ENCODE measurements at regions of chr2 and their contacts with region 1.

Region 1: DNA sequence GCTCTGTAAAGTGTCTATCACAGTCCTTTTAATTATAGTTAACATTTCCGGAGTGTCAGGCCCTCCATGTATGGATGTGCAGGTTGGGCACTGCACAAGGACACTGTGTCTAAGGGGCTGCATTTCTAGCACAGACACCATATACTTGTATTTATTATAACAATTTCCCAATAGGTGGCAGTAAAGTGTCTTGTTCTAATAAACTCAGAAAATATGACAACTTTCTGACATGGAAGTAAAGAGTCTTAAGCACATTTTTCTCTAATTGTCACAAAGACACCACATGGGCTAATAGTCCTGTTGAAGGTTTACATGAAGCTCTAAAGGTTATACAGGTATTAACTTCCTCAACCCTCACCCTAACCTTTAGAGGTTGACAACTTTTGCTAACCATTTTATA is 156.6 kb downstream of the DYSF start:
- DNase-seq: peak; percentile 7
- H3K4me3 ChIP-seq: no peak overlapping the region
- CTCF ChIP-seq: peak; percentile 23

Region 2: DNA sequence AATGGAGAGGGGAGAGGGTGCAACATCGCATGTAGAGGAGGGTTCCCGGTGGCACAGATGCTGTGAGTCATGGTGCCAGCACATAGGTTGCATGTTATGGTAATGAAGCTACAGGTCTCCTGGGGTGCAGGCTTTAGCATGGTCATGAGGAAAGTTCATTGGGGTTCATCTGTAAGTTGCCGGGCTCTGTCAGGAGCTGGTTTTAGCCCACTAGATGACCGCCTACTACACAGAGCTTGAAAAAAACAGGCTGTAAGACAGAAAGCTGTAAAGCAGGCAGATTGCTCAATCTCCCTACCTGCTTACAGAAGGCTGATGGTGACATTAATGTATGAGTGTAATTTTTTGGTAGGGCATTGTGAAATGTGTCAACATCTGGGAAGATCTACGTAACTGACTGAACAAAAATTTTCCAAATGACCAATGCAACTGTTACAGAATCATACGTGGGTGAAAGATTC is 132.7 kb before region 1 on chr2:
- CTCF ChIA-PET with region 1: no interaction called
- POLR2A ChIA-PET with region 1: no interaction called
- DNase-seq: no peak
- H3K4me3 ChIP-seq: no peak overlapping the region
- CTCF ChIP-seq: no peak

Region 3: DNA sequence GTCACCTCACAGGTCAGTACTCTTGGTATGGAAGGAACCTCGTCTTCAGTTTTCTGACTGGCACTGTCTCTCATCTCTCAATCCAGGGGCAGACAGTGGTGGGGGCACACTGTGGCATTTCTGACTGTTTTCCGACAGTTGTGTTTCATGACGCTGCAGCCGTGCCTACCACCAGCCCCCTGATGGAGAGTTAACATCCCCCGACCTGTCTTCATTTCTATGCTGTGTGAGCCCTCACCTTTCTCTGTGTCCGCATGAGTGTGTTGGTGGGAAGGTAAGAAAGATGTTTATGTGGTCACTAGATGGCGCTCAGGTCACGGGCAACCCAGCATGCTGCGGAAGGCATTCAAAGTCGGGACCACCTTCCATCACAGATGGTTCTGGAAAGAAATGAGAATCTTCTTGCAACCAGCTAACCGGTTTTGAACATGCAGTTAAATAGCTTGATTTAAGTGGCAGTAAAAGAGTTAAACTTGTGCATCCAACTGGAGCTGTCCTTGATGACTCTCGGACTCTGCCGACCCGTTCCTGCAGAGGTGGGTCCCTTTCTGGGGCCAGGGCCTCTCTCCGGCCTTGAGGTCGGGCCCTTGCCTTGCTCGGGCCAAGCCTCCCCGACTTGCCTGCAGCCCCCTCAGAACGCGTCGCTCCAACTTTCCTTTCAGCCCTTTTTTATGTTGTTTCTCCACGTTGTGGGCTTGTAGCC is 64.2 kb before region 1 on chr2:
- CTCF ChIA-PET with region 1: interaction called, 30 read pairs
- POLR2A ChIA-PET with region 1: no interaction called
- DNase-seq: no peak
- H3K4me3 ChIP-seq: no peak overlapping the region
- CTCF ChIP-seq: peak; percentile 68

Region 4: GRCh38 chr2:71592181-71592711 is 17.7 kb before region 1 on chr2:
- CTCF ChIA-PET with region 1: interaction called, 50 read pairs
- POLR2A ChIA-PET with region 1: no interaction called
- DNase-seq: no peak
- H3K4me3 ChIP-seq: no peak overlapping the region
- CTCF ChIP-seq: no peak

Region 5: GRCh38 chr2:71631411-71631931 is 21.5 kb after region 1 on chr2:
- CTCF ChIA-PET with region 1: interaction called, 13 read pairs
- POLR2A ChIA-PET with region 1: no interaction called
- DNase-seq: no peak
- H3K4me3 ChIP-seq: peak overlapping the region; percentile 39
- CTCF ChIP-seq: no peak

Region 6: GRCh38 chr2:71789556-71790204 is 179.7 kb after region 1 on chr2:
- CTCF ChIA-PET with region 1: interaction called, 276 read pairs
- POLR2A ChIA-PET with region 1: no interaction called
- DNase-seq: no peak
- H3K4me3 ChIP-seq: no peak overlapping the region
- CTCF ChIP-seq: peak; percentile 27

Region 7: DNA sequence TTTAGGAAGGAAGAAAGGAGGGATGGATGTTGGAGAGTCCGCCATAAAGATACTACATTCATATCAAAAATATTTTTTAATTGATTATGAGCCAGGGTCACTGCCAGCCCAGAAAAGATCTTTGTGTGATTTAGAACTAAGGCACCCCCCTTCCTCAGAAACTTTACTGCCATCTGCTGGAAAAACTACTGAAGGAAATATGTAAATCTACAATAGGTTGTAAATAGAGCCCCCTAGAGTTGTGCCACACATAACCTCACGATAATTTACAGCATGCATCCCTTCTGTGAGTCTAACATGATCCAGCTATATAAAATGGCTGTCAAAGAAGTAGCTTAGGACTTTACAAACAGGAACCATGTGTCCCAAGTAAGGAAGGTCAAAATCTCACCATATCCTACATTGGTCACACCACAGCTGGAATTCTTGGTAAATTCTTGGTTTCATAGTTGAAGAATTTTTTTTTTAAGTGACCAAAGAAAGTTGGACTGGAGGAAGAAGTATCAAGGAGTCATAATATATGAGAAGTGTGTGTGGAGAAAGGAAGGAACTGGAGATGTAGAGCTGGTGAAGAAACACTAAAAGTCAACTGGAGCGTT is 385.2 kb after region 1 on chr2:
- CTCF ChIA-PET with region 1: interaction called, 16 read pairs
- POLR2A ChIA-PET with region 1: no interaction called
- DNase-seq: no peak
- H3K4me3 ChIP-seq: no peak overlapping the region
- CTCF ChIP-seq: peak; percentile 29